ENCODE measurements at regions of chr11 and their contacts with region 1.

Region 1: DNA sequence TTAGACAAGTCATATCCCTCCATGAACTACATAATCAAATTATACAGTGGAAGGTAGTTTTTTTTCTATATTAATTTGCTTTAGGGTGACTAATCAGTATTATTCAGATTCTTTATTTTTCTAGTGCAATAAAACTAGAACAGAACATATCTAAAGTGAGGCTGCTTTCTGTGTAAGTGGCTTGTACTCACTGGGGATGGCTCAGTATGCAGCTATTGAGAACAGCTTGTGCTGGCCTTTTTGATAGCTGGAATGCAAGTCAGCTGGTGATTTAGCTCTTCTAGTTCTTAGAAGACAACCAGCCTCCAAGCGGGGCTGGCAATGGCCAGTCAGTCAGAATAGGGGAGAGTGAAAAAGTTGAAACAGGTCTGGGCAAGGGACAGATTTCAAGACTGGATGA is 119.4 kb downstream of the BLID start:
- DNase-seq: no peak
- ATAC-seq: no peak
- H3K4me3 ChIP-seq: no peak overlapping the region
- H3K4me3 Mint-ChIP-seq: no peak overlapping the region
- H3K27ac ChIP-seq: no peak overlapping the region
- H3K27ac Mint-ChIP-seq: no peak overlapping the region
- H3K4me1 ChIP-seq: no peaks in the 10 kb centered on the region
- H3K4me1 Mint-ChIP-seq: no peaks in the 10 kb centered on the region
- H3K27me3 ChIP-seq: no peaks in the 10 kb centered on the region
- H3K27me3 Mint-ChIP-seq: no peaks in the 10 kb centered on the region
- CTCF ChIP-seq: no peak

Region 2: GRCh38 chr11:122293296-122294023 is 296.9 kb after region 1 on chr11:
- CTCF ChIA-PET with region 1: no interaction called
- POLR2A ChIA-PET with region 1: no interaction called
- intact Hi-C with region 1: no loop called
- DNase-seq: no peak
- ATAC-seq: no peak
- H3K4me3 ChIP-seq: no peak overlapping the region
- H3K4me3 Mint-ChIP-seq: no peak overlapping the region
- H3K27ac ChIP-seq: no peak overlapping the region
- H3K27ac Mint-ChIP-seq: no peak overlapping the region
- H3K4me1 ChIP-seq: no peaks in the 10 kb centered on the region
- H3K4me1 Mint-ChIP-seq: no peaks in the 10 kb centered on the region
- H3K27me3 ChIP-seq: no peaks in the 10 kb centered on the region
- H3K27me3 Mint-ChIP-seq: no peaks in the 10 kb centered on the region
- CTCF ChIP-seq: no peak

Region 3: DNA sequence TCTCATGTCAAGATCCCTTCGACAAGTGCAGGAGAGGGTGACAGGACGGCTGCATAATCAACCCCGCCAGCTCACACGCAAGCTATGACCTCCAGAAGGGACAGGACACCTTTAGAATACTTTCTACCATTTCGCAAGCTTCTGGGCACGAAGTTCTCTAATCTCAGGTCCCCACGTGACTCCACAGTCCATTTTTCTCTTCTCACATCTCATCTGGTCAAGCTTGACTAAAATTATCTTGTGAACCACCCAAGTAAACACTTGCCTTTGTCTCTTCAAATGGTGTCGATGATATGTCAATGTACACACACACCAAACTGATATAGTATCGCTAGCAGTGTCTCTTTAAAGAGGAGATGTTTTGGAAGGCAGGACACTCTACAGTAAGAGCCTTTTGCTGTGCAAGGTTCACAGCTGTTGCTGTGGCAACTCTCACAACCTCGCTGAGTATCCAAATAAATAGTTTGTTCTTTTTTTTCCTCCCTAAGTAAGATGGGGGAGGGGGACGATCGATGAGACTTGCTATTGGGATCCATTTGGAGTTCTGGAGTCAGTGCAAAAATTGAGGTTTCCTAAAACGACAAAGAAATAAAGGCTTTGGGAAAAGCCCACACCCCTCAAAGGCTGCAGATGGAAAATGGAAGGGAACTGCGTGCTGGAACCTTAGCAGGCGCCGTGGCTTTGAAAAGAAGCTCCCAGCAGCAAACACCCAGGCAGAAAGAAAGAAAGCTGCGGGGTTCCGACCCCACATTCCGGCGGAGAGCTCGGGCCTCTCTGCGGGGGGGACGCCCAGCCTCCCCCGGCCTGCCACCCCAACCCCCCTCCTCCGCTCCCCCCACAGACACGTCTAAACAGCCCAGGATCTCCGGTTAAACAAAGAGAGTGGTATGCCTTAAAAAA is 443.6 kb after region 1 on chr11:
- CTCF ChIA-PET with region 1: no interaction called
- POLR2A ChIA-PET with region 1: no interaction called
- intact Hi-C with region 1: loop called in 1 of 2 experiments (anchors 5 kb)
- DNase-seq: no peak
- ATAC-seq: no peak
- H3K4me3 ChIP-seq: no peak overlapping the region
- H3K4me3 Mint-ChIP-seq: no peak overlapping the region
- H3K27ac ChIP-seq: no peak overlapping the region
- H3K27ac Mint-ChIP-seq: no peak overlapping the region
- H3K4me1 ChIP-seq: no peaks in the 10 kb centered on the region
- H3K4me1 Mint-ChIP-seq: peaks cover 4% of the 10 kb centered on the region
- H3K27me3 ChIP-seq: peaks cover 0 to 9% of the 10 kb centered on the region in 2 experiments
- H3K27me3 Mint-ChIP-seq: peaks cover 22% of the 10 kb centered on the region
- CTCF ChIP-seq: no peak

Measured in CD8-positive, alpha-beta T cell (primary cell).